Mammary epithelial cell (primary cell): ENCODE measurements at regions of chr3 and their contacts with region 1.

Region 1: DNA sequence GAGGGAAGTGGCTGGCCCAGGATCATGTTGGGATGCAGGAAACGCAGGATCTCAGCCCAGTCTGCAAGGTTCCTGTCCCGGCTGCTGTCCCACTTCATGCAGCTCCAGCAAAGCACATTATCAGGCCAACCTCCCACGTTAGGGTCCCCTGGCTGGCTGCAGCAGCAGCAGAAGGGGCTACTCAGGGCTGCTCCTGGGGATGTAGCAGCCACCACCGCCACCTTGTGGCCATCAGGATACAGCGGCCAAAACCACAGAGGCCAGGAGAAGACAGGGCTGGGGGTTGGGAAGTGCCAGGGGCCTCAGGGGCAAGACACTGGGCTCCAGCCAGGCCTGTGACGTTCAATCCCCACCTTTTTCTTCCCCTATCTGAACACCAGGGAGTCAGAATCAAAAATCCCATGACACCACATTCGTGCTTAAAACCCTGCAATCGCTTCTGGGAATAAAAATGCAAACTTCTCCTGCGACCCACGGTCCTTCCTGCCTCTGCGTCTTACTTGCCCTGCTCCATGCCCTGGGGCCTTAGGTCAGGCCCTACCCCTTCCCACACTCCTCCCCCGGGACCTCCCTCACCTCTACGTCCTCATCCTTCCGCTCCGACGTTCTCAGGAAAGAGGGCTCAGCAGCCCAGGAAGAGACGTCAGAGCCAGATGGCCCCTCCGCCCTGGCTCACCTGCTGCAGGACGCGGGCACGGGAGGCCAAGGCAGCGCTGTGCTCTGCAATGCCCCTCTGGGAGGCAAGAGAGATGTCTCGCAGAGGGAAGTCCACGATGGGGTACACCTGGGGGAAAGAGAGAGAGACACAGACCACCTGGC is 21.5 kb downstream of the SSUH2 start:
- DNase-seq: peak; percentile 30
- H3K4me3 ChIP-seq: no peak overlapping the region
- H3K27ac ChIP-seq: no peak overlapping the region
- H3K4me1 ChIP-seq: peaks cover 3% of the 10 kb centered on the region
- H3K27me3 ChIP-seq: peaks cover 3% of the 10 kb centered on the region
- CTCF ChIP-seq: peak; percentile 86 to 94

Region 2: GRCh38 chr3:8324740-8325139 is 298.3 kb before region 1 on chr3:
- CTCF ChIA-PET with region 1: no interaction called
- dilution Hi-C with region 1: no loop called
- in situ Hi-C with region 1: no loop called
- intact Hi-C with region 1: loop called (anchors 5 kb)
- DNase-seq: peak; percentile 13
- H3K4me3 ChIP-seq: no peak overlapping the region
- H3K27ac ChIP-seq: no peak overlapping the region
- H3K4me1 ChIP-seq: peaks cover 10% of the 10 kb centered on the region
- H3K27me3 ChIP-seq: peaks cover 2% of the 10 kb centered on the region
- CTCF ChIP-seq: peak; percentile 50 to 70

Region 3: GRCh38 chr3:8441969-8442559 is 181.0 kb before region 1 on chr3:
- CTCF ChIA-PET with region 1: interaction called, 4 read pairs
- dilution Hi-C with region 1: loop called (anchors 25 kb)
- in situ Hi-C with region 1: no loop called
- intact Hi-C with region 1: loop called (anchors 1 kb)
- DNase-seq: peak; percentile 30
- H3K4me3 ChIP-seq: no peak overlapping the region
- H3K27ac ChIP-seq: no peak overlapping the region
- H3K4me1 ChIP-seq: peaks cover 5% of the 10 kb centered on the region
- H3K27me3 ChIP-seq: no peaks in the 10 kb centered on the region
- CTCF ChIP-seq: peak; percentile 63 to 75

Region 4: GRCh38 chr3:8482960-8483665 is 140.0 kb before region 1 on chr3:
- CTCF ChIA-PET with region 1: no interaction called
- dilution Hi-C with region 1: no loop called
- in situ Hi-C with region 1: no loop called
- intact Hi-C with region 1: loop called (anchors 5 kb)
- DNase-seq: peak; percentile 87
- H3K4me3 ChIP-seq: no peak overlapping the region
- H3K27ac ChIP-seq: no peak overlapping the region
- H3K4me1 ChIP-seq: peaks cover 11% of the 10 kb centered on the region
- H3K27me3 ChIP-seq: no peaks in the 10 kb centered on the region
- CTCF ChIP-seq: no peak